Vagina (tissue), 2 donors: ENCODE measurements at regions of chr1 and their contacts with region 1.

Region 1: DNA sequence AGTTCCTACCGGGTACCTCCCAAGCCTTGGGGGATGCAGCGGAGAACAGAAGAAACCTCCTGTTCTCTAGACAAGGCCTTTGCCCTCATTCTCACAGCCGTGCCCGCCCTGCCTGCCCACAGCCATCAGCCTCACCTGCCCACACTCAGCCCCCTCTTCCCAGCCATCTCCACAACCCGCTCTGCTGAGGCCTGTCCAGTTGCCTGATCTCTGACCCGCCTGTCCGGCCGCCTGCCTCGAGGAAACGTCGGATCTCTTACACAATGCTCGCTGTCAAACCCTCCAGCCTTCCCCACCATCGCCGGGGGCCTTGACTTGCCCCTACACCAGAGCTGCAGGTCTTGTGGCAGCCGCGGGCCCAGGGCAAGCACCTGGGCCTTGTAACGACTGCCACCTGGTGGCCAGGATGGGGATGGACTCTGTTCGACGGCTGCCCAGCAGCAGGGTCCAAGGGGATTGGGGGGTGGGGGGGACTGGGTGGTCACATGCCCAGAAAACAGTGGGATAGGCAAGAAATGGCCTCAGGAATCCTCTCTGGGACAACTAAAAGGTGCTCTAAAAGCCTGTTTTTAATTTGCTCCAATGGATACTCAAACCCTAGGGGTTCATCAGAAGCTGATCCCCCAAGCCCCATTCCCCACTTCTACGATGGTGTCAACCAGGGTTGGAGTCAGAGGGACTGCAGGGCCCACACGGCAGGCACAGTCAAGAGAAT is 31.0 kb downstream of the SLC45A1 start:
- DNase-seq: no peak
- H3K4me3 ChIP-seq: no peak overlapping the region
- H3K27ac ChIP-seq: peak overlapping the region; percentile 35
- H3K4me1 ChIP-seq: peaks cover 23% of the 10 kb centered on the region
- H3K27me3 ChIP-seq: no peaks in the 10 kb centered on the region
- CTCF ChIP-seq: peak; percentile 79 to 89 (median 88)
- POLR2A ChIP-seq: no peak

Region 2: GRCh38 chr1:7983086-7983778 is 365.7 kb before region 1 on chr1:
- intact Hi-C with region 1: loop called (anchors 5 kb)
- DNase-seq: no peak
- H3K4me3 ChIP-seq: no peak overlapping the region
- H3K27ac ChIP-seq: peak overlapping the region; percentile 69
- H3K4me1 ChIP-seq: peaks cover 10% of the 10 kb centered on the region
- H3K27me3 ChIP-seq: no peaks in the 10 kb centered on the region
- CTCF ChIP-seq: no peak
- POLR2A ChIP-seq: no peak

Region 3: GRCh38 chr1:8293118-8293517 is 55.8 kb before region 1 on chr1:
- intact Hi-C with region 1: no loop called
- DNase-seq: no peak
- H3K4me3 ChIP-seq: no peak overlapping the region
- H3K27ac ChIP-seq: no peak overlapping the region
- H3K4me1 ChIP-seq: no peaks in the 10 kb centered on the region
- H3K27me3 ChIP-seq: no peaks in the 10 kb centered on the region
- CTCF ChIP-seq: no peak
- POLR2A ChIP-seq: no peak